Activated CD4-positive, alpha-beta memory T cell treated with anti-CD3 and anti-CD28 coated beads, Interleukin-2, amount 10 ng/mL, durations not matched to agents 7 days and 5 days (primary cell): ENCODE measurements at regions of chr2 and their contacts with region 1.

Region 1: DNA sequence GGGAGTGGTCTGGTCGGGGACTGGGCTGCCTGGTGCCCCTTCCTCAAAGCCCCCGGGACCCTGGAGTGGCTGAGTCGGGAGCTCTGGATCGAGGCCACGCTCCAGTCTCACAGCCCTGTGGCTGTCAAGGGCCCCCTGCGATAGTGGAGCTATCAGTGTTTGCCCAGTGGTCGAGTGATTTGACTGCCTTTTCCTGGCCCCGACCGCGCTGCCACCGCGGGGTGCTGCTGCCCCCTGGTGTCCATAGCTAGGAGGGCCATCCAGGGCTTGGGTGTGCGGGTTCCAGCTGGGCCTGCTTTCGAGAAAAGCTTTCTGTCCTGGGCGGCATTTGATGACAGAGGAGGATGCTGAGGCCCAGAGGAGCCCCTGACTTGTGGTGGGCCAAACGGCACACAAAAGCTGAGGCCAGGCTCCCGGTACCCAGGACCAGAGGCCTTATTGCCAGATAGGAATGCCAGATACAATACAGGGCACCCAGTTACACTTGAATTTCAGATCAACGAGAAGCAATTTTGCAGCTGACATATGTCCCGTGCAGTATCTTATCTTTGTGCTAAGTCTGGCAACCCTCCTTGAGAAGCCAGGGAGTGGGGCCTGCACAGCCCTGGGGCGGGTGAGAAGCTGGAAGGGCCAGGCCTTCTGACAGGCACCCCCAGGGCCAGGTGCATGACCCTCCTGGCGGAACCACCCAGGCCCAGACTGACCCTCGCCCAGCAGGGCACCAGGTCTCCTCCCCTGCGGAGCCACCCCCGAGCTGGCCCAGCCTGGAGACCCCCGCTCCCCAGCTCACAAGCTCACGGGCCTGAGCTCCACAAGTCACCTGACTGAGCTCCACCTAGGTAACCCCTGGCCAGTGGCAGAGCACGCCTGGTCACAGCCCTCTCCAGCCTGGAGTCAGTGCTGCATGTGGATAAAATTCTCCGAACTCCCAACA is 13.0 kb downstream of the ODC1 start:
- DNase-seq: peak; percentile 75
- H3K4me3 Mint-ChIP-seq: no peak overlapping the region
- H3K27ac Mint-ChIP-seq: no peak overlapping the region
- H3K4me1 Mint-ChIP-seq: peaks cover 15% of the 10 kb centered on the region
- H3K27me3 Mint-ChIP-seq: peaks cover 12% of the 10 kb centered on the region

Region 2: DNA sequence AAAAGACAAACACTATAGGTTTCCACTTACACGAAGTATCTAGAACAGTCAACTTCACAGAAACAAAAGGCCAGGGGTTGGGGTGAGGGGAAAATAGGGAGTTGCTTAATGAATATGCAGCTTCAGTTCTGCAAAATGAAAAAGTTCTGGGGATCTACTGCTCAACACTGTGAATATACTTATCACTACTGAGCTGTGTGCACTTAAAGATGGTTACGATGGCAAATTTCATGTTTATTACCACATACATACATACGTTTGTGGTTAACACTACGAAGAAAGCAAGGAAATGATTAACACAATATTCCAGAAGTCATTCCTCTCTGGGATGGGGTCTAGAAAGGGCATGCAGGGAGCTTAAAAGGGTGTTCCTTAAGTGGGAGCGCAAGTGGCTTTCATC is 1451.0 kb before region 1 on chr2:
- CTCF ChIA-PET with region 1: no interaction called
- POLR2A ChIA-PET with region 1: no interaction called
- DNase-seq: no peak
- H3K4me3 Mint-ChIP-seq: no peak overlapping the region
- H3K27ac Mint-ChIP-seq: no peak overlapping the region
- H3K4me1 Mint-ChIP-seq: no peaks in the 10 kb centered on the region
- H3K27me3 Mint-ChIP-seq: peaks cover 14% of the 10 kb centered on the region

Region 3: DNA sequence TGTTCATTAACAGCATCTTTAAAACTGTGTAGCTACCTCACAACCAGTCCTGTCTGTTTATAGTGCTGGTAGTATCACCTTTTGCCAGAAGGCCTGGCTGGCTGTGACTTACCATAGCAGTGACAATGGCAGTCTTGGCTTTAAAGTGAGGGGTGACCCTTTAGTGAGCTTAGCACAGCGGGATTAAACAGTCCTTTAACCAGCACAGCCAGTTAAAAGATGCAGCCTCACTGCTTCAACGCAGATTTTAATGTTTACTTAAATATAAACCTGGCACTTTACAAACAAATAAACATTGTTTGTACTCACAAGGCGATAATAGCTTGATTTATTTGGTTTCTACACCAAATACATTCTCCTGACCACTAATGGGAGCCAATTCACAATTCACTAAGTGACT is 305.7 kb before region 1 on chr2:
- CTCF ChIA-PET with region 1: interaction called, 53 read pairs
- POLR2A ChIA-PET with region 1: interaction called, 30 read pairs
- DNase-seq: no peak
- H3K4me3 Mint-ChIP-seq: peak overlapping the region; percentile 50
- H3K27ac Mint-ChIP-seq: peak overlapping the region; percentile 77
- H3K4me1 Mint-ChIP-seq: peaks cover 76% of the 10 kb centered on the region
- H3K27me3 Mint-ChIP-seq: no peaks in the 10 kb centered on the region

Region 4: GRCh38 chr2:10141736-10142642 is 293.2 kb before region 1 on chr2:
- CTCF ChIA-PET with region 1: interaction called, 48 read pairs
- POLR2A ChIA-PET with region 1: interaction called, 3 read pairs
- DNase-seq: peak; percentile 36
- H3K4me3 Mint-ChIP-seq: no peak overlapping the region
- H3K27ac Mint-ChIP-seq: peak overlapping the region; percentile 53
- H3K4me1 Mint-ChIP-seq: peaks cover 27% of the 10 kb centered on the region
- H3K27me3 Mint-ChIP-seq: no peaks in the 10 kb centered on the region

Region 5: DNA sequence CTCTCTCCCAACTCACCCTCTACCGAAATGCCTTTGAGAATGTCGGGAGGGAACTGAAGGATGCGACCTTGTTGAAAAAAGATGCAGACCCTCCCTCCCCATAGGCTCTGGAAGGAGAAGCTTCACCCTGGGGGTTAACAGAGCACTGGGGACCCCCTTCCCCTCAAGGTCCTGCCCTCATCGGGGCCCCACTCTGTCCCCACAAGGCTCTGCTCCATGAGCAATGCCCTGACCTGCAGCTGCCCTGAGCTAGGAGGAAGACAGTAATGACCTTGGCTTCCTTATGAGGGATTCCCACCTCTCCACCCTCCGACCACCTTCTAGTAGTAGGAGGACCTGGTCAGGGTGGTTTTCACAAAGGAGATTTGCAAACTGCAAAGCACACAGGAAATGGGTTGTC is 176.8 kb before region 1 on chr2:
- CTCF ChIA-PET with region 1: no interaction called
- POLR2A ChIA-PET with region 1: no interaction called
- DNase-seq: no peak
- H3K4me3 Mint-ChIP-seq: no peak overlapping the region
- H3K27ac Mint-ChIP-seq: no peak overlapping the region
- H3K4me1 Mint-ChIP-seq: peaks cover 8% of the 10 kb centered on the region
- H3K27me3 Mint-ChIP-seq: peaks cover 9% of the 10 kb centered on the region

Region 6: GRCh38 chr2:10659898-10660568 is 224.9 kb after region 1 on chr2:
- CTCF ChIA-PET with region 1: interaction called, 15 read pairs
- POLR2A ChIA-PET with region 1: no interaction called
- DNase-seq: peak; percentile 71
- H3K4me3 Mint-ChIP-seq: no peak overlapping the region
- H3K27ac Mint-ChIP-seq: no peak overlapping the region
- H3K4me1 Mint-ChIP-seq: peaks cover 17% of the 10 kb centered on the region
- H3K27me3 Mint-ChIP-seq: no peaks in the 10 kb centered on the region